Natural killer cell (primary cell): ENCODE measurements at regions of chr11 and their contacts with region 1.

Region 1: DNA sequence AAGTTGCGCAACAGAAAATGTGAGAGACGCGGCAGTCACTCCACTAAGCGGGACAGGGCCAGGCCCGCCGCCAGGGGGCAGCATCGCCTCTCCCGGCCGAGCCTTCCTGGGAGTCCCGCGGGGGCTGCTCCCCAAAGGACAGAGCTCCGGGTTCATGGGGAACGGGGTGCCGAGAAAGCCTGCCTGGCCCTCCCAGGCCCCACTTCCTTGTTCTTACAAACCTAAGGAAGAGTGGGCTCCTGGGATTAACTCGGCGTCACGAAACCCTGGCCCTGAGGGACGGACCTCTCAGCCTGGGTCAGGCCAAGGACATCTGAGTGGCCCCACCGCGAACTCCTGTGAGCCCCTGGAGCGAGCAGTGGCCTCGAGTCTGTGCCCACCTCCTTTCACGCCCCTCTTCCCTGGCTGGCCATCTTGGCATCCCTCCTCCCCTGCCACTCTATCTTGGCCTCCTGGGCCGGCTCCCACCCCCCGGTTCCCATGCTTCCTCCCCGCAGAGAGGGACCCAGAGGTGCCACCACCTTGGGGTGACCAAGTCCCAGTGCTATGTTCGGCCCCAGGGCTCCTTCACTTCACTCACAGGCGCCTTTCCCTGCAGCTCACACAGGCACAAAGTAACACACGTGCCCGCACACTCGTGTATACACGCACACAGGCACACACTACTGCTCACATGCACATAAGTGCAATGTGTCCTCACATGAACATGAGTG is 99.9 kb upstream of the FGF3 start:
- DNase-seq: peak; percentile 57 to 76
- ATAC-seq: peak in 2 of 3 donors; percentile 49 to 75
- H3K4me3 ChIP-seq: no peak overlapping the region
- H3K4me3 Mint-ChIP-seq: no peak overlapping the region
- H3K27ac ChIP-seq: no peak overlapping the region
- H3K27ac Mint-ChIP-seq: no peak overlapping the region
- H3K4me1 ChIP-seq: no peaks in the 10 kb centered on the region
- H3K4me1 Mint-ChIP-seq: peaks cover 0 to 9% of the 10 kb centered on the region in 2 donors
- H3K27me3 ChIP-seq: peaks cover 2% of the 10 kb centered on the region
- H3K27me3 Mint-ChIP-seq: peaks cover 15 to 16% of the 10 kb centered on the region in 2 donors
- CTCF ChIP-seq: peak; percentile 76

Region 2: DNA sequence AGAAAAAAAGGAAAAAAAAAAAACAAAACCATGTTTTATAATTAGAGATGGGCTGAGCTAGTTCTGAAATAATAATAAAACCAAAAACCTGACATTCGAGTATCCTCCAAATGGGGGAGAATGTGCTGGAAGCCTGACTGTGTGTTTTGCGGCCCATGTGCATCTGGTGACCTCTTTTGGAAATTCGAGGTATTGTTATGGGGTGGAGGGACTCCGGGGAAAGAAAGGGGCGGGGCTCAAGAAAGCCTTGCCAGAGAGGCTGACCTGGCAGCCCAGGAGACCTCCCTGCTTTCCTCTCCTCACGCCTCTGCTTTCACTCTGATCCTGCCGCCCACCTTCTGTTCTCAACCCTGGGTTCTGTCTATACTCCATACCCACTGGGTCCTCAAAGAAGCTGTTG is 552.2 kb after region 1 on chr11:
- intact Hi-C with region 1: loop called (anchors 10 kb)
- DNase-seq: peak in 1 of 2 donors; percentile 42
- ATAC-seq: peak in 1 of 3 donors; percentile 69
- H3K4me3 ChIP-seq: no peak overlapping the region
- H3K4me3 Mint-ChIP-seq: no peak overlapping the region
- H3K27ac ChIP-seq: no peak overlapping the region
- H3K27ac Mint-ChIP-seq: no peak overlapping the region
- H3K4me1 ChIP-seq: no peaks in the 10 kb centered on the region
- H3K4me1 Mint-ChIP-seq: no peaks in the 10 kb centered on the region
- H3K27me3 ChIP-seq: no peaks in the 10 kb centered on the region
- H3K27me3 Mint-ChIP-seq: peaks cover 6 to 45% of the 10 kb centered on the region in 2 donors
- CTCF ChIP-seq: no peak

Region 3: DNA sequence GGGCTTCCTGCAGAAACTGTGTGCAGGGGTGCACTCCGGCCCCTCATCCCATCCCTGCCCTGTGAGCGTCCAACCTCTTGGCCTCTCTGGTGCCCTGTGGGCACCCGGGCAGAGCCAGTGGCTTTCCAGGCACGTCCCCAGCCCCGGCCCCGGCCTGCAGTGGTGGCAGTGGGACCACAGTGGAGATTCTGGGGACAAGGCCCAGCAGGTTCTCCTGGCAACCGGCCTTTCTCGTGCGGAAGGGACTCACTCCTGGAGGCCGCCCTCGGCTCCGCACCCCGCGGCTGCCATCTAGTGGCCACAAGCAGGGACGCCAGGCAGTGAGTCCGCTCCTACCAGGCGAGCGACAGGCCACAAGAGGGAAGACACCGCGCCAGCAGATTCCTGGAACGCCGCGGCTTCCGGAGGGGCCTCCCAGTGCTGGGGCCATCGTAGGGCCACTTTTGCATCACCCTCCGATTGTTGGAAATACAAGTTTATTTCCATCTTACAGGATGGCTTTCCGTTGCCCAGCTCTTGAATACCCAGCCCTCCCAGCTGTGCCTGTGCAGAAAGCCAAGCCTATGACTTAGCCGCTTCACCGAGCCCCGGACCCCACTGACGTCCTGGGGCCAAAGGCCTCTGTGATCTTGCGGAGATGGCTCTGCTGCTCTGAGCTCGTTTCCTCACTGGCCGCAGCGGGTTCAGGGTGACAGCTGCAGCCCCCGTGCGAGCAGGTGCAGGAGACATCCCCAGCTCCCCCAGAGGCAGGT is 836.5 kb after region 1 on chr11:
- intact Hi-C with region 1: loop called (anchors 5 kb)
- DNase-seq: peak; percentile 56 to 59
- ATAC-seq: peak; percentile 60 to 99 (median 81)
- H3K4me3 ChIP-seq: no peak overlapping the region
- H3K4me3 Mint-ChIP-seq: no peak overlapping the region
- H3K27ac ChIP-seq: no peak overlapping the region
- H3K27ac Mint-ChIP-seq: no peak overlapping the region
- H3K4me1 ChIP-seq: peaks cover 4% of the 10 kb centered on the region
- H3K4me1 Mint-ChIP-seq: no peaks in the 10 kb centered on the region
- H3K27me3 ChIP-seq: peaks cover 2% of the 10 kb centered on the region
- H3K27me3 Mint-ChIP-seq: peaks cover 2 to 17% of the 10 kb centered on the region in 2 donors
- CTCF ChIP-seq: peak; percentile 77